Activated naive CD4-positive, alpha-beta T cell treated with anti-CD3 and anti-CD28 coated beads for 36 hours (primary cell): ENCODE measurements at regions of chr2 and their contacts with region 1.

Region 1: DNA sequence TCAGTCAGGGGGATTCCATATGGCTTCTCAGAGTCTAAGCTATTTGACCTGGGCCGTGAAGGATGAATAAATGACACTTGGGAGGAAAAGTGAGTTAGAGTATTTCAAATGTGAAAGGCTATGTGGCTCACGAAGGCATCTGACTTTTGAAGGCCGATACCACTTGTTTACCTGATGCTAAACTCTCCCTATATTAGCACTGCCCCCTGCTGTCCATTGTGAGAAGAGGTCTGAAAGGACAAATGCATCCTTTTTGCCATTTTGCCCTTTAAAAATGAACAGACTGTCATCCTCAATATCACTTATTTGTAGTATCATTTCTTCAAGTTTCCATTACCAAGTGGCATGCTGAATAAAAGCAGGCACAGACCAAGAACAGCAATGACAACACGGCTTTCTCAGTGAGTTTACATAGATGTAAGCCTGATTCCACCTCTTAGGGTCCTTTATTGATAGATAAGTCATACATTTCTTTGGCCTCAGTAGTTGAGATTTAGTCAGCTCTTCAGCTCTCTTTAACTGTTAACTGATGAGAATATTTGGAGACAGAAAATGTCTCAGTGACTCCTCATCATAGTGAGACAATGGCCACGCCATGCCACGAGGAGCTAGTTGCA is 40.1 kb downstream of the DOCK10 start:
- DNase-seq: peak; percentile 84
- H3K4me3 Mint-ChIP-seq: peak overlapping the region; percentile 22
- H3K27ac Mint-ChIP-seq: peak overlapping the region; percentile 86
- H3K4me1 Mint-ChIP-seq: peaks cover 83% of the 10 kb centered on the region
- H3K27me3 Mint-ChIP-seq: no peaks in the 10 kb centered on the region

Region 2: GRCh38 chr2:224778474-224778877 is 223.7 kb before region 1 on chr2:
- CTCF ChIA-PET with region 1: interaction called, 6 read pairs
- intact Hi-C with region 1: loop called (anchors 2 kb)
- DNase-seq: peak; percentile 86
- H3K4me3 Mint-ChIP-seq: no peak overlapping the region
- H3K27ac Mint-ChIP-seq: peak overlapping the region; percentile 22
- H3K4me1 Mint-ChIP-seq: peaks cover 5% of the 10 kb centered on the region
- H3K27me3 Mint-ChIP-seq: no peaks in the 10 kb centered on the region

Region 3: GRCh38 chr2:224938651-224939182 is 63.4 kb before region 1 on chr2:
- CTCF ChIA-PET with region 1: interaction called, 34 read pairs
- intact Hi-C with region 1: no loop called
- DNase-seq: peak; percentile 53
- H3K4me3 Mint-ChIP-seq: peak overlapping the region; percentile 59
- H3K27ac Mint-ChIP-seq: peak overlapping the region; percentile 89
- H3K4me1 Mint-ChIP-seq: peaks cover 80% of the 10 kb centered on the region
- H3K27me3 Mint-ChIP-seq: no peaks in the 10 kb centered on the region

Region 4: DNA sequence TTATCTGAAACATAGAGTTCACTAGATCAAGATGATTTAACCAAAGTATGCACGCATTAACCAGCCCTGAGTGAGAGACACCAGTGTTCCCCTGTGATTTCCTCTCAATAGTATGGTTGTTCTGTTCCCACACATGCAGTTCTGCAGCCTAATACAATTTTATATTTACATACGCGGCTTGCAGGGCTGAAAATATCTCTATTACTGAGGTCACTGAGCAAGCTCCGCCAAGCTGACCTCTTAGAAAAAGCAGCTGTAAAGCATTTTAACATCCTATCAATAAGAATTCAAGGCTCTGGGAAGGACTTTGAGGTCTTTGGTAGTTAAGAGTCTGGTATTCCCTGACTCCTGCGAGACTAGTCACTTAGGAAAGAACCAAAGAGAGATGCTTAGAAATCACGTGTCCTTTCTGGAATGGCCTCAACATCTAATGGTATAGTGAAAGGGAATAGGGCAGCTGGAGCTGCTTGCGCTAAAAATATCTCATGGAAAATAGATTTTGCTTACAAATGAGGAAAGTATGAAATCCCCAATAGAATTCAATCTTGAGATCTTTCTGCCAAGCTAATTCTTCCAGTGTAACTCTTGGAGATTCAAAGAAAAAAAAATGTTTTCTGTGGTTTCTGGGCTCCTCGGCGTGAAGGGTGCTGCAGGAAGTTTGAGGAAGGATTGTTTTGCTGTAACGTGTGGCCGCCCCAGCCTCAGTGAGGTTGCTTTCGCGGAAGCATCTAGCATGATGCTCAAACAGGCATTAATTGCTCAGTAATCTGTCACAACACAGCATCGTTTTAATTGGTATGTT is 19.0 kb before region 1 on chr2:
- CTCF ChIA-PET with region 1: interaction called, 29 read pairs
- intact Hi-C with region 1: no loop called
- DNase-seq: peak; percentile 61
- H3K4me3 Mint-ChIP-seq: peak overlapping the region; percentile 56
- H3K27ac Mint-ChIP-seq: peak overlapping the region; percentile 90
- H3K4me1 Mint-ChIP-seq: peaks cover 69% of the 10 kb centered on the region
- H3K27me3 Mint-ChIP-seq: no peaks in the 10 kb centered on the region

Region 5: GRCh38 chr2:225052703-225053102 is 50.6 kb after region 1 on chr2:
- CTCF ChIA-PET with region 1: interaction called, 6 read pairs
- intact Hi-C with region 1: loop called (anchors 1 kb)
- DNase-seq: peak; percentile 42
- H3K4me3 Mint-ChIP-seq: no peak overlapping the region
- H3K27ac Mint-ChIP-seq: peak overlapping the region; percentile 70
- H3K4me1 Mint-ChIP-seq: peaks cover 49% of the 10 kb centered on the region
- H3K27me3 Mint-ChIP-seq: no peaks in the 10 kb centered on the region

Region 6: GRCh38 chr2:225100856-225101294 is 98.7 kb after region 1 on chr2:
- CTCF ChIA-PET with region 1: no interaction called
- intact Hi-C with region 1: no loop called
- DNase-seq: no peak
- H3K4me3 Mint-ChIP-seq: no peak overlapping the region
- H3K27ac Mint-ChIP-seq: no peak overlapping the region
- H3K4me1 Mint-ChIP-seq: no peaks in the 10 kb centered on the region
- H3K27me3 Mint-ChIP-seq: no peaks in the 10 kb centered on the region

Region 7: DNA sequence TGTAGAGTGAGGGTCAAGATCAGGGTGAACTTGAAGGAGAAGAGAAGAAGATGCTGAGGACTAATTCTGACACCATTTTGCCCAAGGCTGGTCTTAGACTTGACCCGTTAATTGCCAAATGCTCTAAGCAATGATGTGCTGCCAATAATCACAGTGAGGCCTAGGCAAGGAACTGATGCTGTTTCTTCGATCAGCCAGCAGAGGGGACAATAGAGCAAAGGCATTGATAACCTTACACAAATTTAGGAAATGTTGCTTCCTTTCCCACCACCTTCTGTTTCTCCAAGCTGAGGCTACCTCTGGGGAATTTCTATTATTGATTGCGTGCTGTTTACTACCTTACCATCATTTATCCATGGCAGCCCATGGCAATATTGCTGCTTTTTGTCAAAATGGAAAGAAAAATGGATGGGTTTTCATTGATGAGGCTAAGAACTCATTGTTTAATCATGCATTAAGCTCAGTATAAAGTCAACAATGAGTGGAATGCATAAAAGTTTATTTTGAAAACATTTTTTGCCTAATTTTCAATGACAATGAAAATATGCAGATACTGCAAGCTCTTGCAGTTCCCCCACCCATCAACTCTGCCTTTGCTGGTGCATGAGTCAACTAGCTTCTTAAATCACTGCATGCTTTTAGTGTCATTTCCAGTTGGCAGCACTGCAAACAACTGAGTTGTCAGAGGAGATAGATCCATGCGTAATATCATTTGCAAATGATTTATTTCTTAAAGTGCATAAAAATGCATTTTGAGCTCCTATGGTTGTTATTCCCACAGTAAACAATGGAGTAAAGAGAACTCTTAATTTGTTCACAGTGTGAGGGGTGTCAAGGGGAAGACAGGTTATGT is 280.9 kb after region 1 on chr2:
- CTCF ChIA-PET with region 1: interaction called, 3 read pairs
- intact Hi-C with region 1: loop called (anchors 10 kb)
- DNase-seq: peak; percentile 31
- H3K4me3 Mint-ChIP-seq: no peak overlapping the region
- H3K27ac Mint-ChIP-seq: no peak overlapping the region
- H3K4me1 Mint-ChIP-seq: peaks cover 3% of the 10 kb centered on the region
- H3K27me3 Mint-ChIP-seq: no peaks in the 10 kb centered on the region